ENCODE measurements at regions of chr6 and their contacts with region 1.

Region 1: GRCh38 chr6:27078734-27079357 is 168.7 kb upstream of the PRSS16 start:
- DNase-seq: peak; percentile 57
- ATAC-seq: peak; percentile 97
- H3K4me3 ChIP-seq: peak overlapping the region; percentile 63
- H3K27ac ChIP-seq: no peak overlapping the region
- H3K4me1 ChIP-seq: no peaks in the 10 kb centered on the region
- H3K27me3 ChIP-seq: no peaks in the 10 kb centered on the region
- CTCF ChIP-seq: peak; percentile 59 to 79 (median 73)
- EP300 ChIP-seq: no peak
- POLR2A ChIP-seq: no peak
- RAD21 ChIP-seq: peak; percentile 93

Region 2: DNA sequence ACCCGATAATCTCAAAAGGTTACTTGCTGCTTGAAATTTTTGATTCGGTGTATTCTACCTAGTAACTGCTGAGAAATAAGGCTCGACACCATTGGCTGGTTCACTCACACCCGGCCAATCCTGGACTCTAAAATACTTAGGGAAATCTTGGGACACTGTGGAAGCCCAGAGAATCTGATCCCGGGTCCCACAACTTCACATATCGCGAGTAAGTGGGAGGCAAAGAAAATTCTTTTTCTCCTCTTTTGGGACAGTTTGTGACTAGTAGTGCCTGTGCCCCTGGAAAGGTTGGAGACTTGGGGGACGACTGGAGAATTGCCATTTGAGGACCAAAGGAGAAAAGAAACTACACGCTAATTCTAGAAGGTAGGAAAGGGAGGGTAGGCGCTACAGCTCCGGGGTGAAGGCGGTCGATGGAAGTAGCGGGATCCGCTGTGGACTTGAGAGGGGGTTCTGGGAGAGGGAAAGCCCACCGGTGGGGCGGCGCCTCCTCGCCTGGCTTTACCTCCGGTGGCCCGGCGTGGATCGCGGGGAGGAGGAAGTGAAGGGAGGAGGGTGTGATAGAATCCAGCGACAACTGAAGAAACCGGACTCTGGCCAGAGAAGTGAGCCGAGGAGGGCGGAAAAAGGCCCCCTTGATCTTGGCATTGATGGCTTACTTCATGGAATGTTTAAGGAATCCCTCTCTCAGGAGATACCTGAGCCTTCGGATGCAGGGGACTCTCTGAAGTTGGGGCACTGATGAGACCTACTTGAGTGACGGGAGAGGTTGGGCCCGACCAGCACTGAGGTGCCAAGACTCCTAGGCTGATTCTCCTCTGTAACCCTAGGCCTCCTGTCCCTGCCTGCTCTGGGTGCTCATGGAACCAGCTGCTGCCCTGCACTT is 657.3 kb before region 1 on chr6:
- CTCF ChIA-PET with region 1: no interaction called
- POLR2A ChIA-PET with region 1: no interaction called
- RAD21 ChIA-PET with region 1: no interaction called
- SMC1A ChIA-PET with region 1: no interaction called
- in situ Hi-C with region 1: no loop called
- intact Hi-C with region 1: no loop called
- DNase-seq: peak; percentile 43
- ATAC-seq: peak; percentile 98
- H3K4me3 ChIP-seq: peak overlapping the region; percentile 69
- H3K27ac ChIP-seq: peak overlapping the region; percentile 54
- H3K4me1 ChIP-seq: peaks cover 4% of the 10 kb centered on the region; the same call in 1 of the 2 replicates
- H3K27me3 ChIP-seq: no peaks in the 10 kb centered on the region
- CTCF ChIP-seq: no peak
- EP300 ChIP-seq: no peak
- POLR2A ChIP-seq: 0 out of 2 replicates have a peak, but pooled peaks have one; percentile 36
- RAD21 ChIP-seq: no peak

Region 3: GRCh38 chr6:26607434-26608230 is 471.2 kb before region 1 on chr6:
- CTCF ChIA-PET with region 1: interaction called, 42 read pairs
- POLR2A ChIA-PET with region 1: no interaction called
- RAD21 ChIA-PET with region 1: interaction called, 7 read pairs
- SMC1A ChIA-PET with region 1: interaction called, 3 read pairs
- in situ Hi-C with region 1: loop called (anchors 5 kb)
- intact Hi-C with region 1: loop called (anchors 1 kb)
- DNase-seq: no peak
- ATAC-seq: peak; percentile 99
- H3K4me3 ChIP-seq: no peak overlapping the region
- H3K27ac ChIP-seq: no peak overlapping the region
- H3K4me1 ChIP-seq: no peaks in the 10 kb centered on the region; the same call in 1 of the 2 replicates
- H3K27me3 ChIP-seq: no peaks in the 10 kb centered on the region
- CTCF ChIP-seq: peak; percentile 73 to 87 (median 78)
- EP300 ChIP-seq: no peak
- POLR2A ChIP-seq: no peak
- RAD21 ChIP-seq: peak; percentile 96

Region 4: GRCh38 chr6:26613689-26614683 is 464.9 kb before region 1 on chr6:
- CTCF ChIA-PET with region 1: interaction called, 42 read pairs
- POLR2A ChIA-PET with region 1: no interaction called
- RAD21 ChIA-PET with region 1: interaction called, 3 read pairs
- SMC1A ChIA-PET with region 1: no interaction called
- in situ Hi-C with region 1: loop called (anchors 5 kb)
- intact Hi-C with region 1: no loop called
- DNase-seq: no peak
- ATAC-seq: peak; percentile 46
- H3K4me3 ChIP-seq: 0 out of 2 replicates have a peak overlapping the region, but pooled peaks have one; percentile 16
- H3K27ac ChIP-seq: no peak overlapping the region
- H3K4me1 ChIP-seq: no peaks in the 10 kb centered on the region
- H3K27me3 ChIP-seq: peaks cover 0 to 5% of the 10 kb centered on the region in 2 experiments; a peak in 2 of 4 replicates
- CTCF ChIP-seq: no peak
- EP300 ChIP-seq: no peak
- POLR2A ChIP-seq: no peak
- RAD21 ChIP-seq: no peak

Region 5: DNA sequence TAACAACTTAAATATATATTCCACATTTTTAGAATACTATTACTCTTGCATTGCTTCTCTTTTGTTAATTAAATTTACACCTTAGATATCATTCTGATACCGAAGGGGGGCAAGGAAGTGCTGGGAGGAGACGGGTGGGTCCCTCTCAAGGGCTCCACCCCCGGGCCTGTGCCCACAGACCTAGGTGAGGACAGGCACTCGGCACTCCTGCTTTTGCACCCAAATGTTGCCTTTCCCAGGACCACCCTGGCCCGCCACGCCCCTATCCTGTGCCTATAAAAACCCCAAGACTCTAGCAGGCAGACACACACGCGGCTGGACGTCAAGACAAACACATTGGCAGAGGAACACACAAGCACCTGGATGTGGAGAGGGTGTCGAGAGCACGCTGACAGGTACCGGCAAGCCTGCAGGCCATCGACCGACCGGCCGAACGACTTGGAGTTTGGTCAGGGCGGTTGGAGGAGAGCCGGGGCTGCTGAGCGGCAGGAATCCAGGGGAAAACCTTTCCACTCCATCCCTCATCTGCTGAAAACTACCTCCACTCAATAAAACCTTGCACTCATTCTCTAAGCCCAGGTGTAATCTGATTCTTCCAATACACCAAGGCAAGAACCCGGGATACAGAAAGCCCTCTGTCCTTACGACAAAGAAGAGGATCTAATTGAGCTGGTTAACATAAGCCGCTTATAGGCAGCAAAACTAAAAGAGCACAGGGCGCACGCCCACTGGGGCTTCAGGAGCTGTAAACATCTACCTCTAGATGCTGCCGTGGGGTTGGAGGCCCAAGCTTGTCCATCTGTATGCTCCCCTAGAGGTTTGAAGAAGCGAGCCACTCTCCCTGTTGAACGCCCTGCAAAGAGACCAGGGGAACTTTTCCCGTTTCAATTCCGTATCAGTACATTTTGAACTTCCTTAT is 28.7 kb before region 1 on chr6:
- CTCF ChIA-PET with region 1: interaction called, 3 read pairs
- POLR2A ChIA-PET with region 1: no interaction called
- RAD21 ChIA-PET with region 1: no interaction called
- SMC1A ChIA-PET with region 1: interaction called, 15 read pairs
- in situ Hi-C with region 1: no loop called
- intact Hi-C with region 1: no loop called
- DNase-seq: no peak
- ATAC-seq: no peak
- H3K4me3 ChIP-seq: no peak overlapping the region
- H3K27ac ChIP-seq: no peak overlapping the region
- H3K4me1 ChIP-seq: peaks cover 21% of the 10 kb centered on the region
- H3K27me3 ChIP-seq: no peaks in the 10 kb centered on the region
- CTCF ChIP-seq: no peak
- EP300 ChIP-seq: no peak
- POLR2A ChIP-seq: no peak
- RAD21 ChIP-seq: no peak

Region 6: GRCh38 chr6:27059621-27060425 is 19.0 kb before region 1 on chr6:
- CTCF ChIA-PET with region 1: interaction called, 21 read pairs
- POLR2A ChIA-PET with region 1: interaction called, 3 read pairs
- RAD21 ChIA-PET with region 1: interaction called, 4 read pairs
- SMC1A ChIA-PET with region 1: interaction called, 6 read pairs
- in situ Hi-C with region 1: no loop called
- intact Hi-C with region 1: no loop called
- DNase-seq: no peak
- ATAC-seq: peak; percentile 39; the same call in 2 of the 3 replicates
- H3K4me3 ChIP-seq: no peak overlapping the region
- H3K27ac ChIP-seq: no peak overlapping the region
- H3K4me1 ChIP-seq: no peaks in the 10 kb centered on the region
- H3K27me3 ChIP-seq: no peaks in the 10 kb centered on the region
- CTCF ChIP-seq: no peak
- EP300 ChIP-seq: no peak
- POLR2A ChIP-seq: no peak
- RAD21 ChIP-seq: no peak

Region 7: GRCh38 chr6:27066802-27067201 is 12.0 kb before region 1 on chr6:
- CTCF ChIA-PET with region 1: interaction called, 21 read pairs
- POLR2A ChIA-PET with region 1: interaction called, 3 read pairs
- RAD21 ChIA-PET with region 1: interaction called, 4 read pairs
- SMC1A ChIA-PET with region 1: interaction called, 10 read pairs
- in situ Hi-C with region 1: no loop called
- intact Hi-C with region 1: no loop called
- DNase-seq: no peak
- ATAC-seq: no peak
- H3K4me3 ChIP-seq: no peak overlapping the region
- H3K27ac ChIP-seq: no peak overlapping the region
- H3K4me1 ChIP-seq: no peaks in the 10 kb centered on the region
- H3K27me3 ChIP-seq: no peaks in the 10 kb centered on the region
- CTCF ChIP-seq: no peak
- EP300 ChIP-seq: no peak
- POLR2A ChIP-seq: no peak
- RAD21 ChIP-seq: no peak

Region 8: GRCh38 chr6:27237089-27237803 is 158.4 kb after region 1 on chr6:
- CTCF ChIA-PET with region 1: no interaction called
- POLR2A ChIA-PET with region 1: no interaction called
- RAD21 ChIA-PET with region 1: no interaction called
- SMC1A ChIA-PET with region 1: no interaction called
- in situ Hi-C with region 1: no loop called
- intact Hi-C with region 1: no loop called
- DNase-seq: no peak
- ATAC-seq: peak; percentile 75
- H3K4me3 ChIP-seq: peak overlapping the region; percentile 67
- H3K27ac ChIP-seq: no peak overlapping the region
- H3K4me1 ChIP-seq: peaks cover 9% of the 10 kb centered on the region
- H3K27me3 ChIP-seq: no peaks in the 10 kb centered on the region
- CTCF ChIP-seq: no peak
- EP300 ChIP-seq: no peak; a peak in 1 of 4 replicates
- POLR2A ChIP-seq: no peak
- RAD21 ChIP-seq: no peak

Measured in GM12878 (cell line).